MCF 10A (cell line): ENCODE measurements at regions of chr11 and their contacts with region 1.

Region 1: GRCh38 chr11:65859200-65859811 is 927 bp upstream of the MUS81 start:
- DNase-seq: peak; percentile 98
- H3K4me3 Mint-ChIP-seq: peak overlapping the region; percentile 83
- H3K27ac Mint-ChIP-seq: peak overlapping the region; percentile 93
- H3K4me1 Mint-ChIP-seq: peaks cover 32% of the 10 kb centered on the region
- H3K27me3 Mint-ChIP-seq: no peaks in the 10 kb centered on the region
- CTCF ChIP-seq: no peak

Region 2: DNA sequence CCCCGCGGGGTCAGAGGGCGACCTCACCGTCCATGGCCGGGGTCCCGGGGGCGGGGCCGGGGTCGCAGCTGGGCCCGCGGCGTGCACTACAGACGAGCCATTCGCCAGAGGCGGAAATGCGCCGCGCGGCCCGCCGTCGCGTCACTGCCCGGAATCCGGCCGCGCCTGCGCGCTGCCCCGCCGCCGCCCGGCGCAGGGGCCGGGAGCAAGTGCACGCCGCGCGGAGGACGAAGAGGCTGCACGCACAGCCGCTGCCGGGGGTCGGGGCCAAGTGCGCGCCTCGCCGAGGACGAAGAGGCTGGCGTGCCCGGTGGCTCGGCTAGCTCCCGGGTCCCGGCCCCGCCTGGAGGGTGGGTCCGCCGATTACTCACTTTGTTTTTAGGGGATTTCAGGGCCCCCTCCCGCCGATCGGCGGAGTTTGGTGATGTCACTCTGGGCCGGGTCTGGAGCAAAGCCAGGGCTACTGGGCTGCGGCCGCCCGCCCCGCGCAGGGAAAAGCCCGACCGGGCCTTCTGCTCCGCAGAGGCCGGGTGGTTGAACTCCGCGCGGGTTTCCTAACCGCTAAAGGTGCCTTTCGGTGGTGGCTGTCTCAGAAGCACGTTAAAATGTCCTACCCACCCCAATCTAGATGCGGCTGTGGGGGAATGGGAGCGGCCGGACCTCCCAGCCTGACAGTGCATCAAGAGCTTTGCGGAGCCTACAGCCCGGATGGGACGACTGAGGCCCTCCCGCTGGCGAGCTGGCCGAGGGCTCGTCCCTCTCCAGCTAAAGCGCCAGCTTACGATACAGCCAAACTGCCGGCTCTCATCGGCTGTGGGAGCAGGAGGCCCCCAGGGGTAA is 196.3 kb before region 1 on chr11 and contains the start of gene RELA:
- CTCF ChIA-PET with region 1: interaction called, 3 read pairs
- POLR2A ChIA-PET with region 1: interaction called, 15 read pairs
- intact Hi-C with region 1: no loop called
- DNase-seq: peak; percentile 91
- H3K4me3 Mint-ChIP-seq: peak within 1 kb of the TSS; percentile 74
- H3K27ac Mint-ChIP-seq: peak within 1 kb of the TSS; percentile 73
- H3K4me1 Mint-ChIP-seq: peaks cover 12% of the 10 kb centered on the region
- H3K27me3 Mint-ChIP-seq: no peaks in the 10 kb centered on the region
- CTCF ChIP-seq: no peak
- total RNA-seq, gene RELA: 82.1 and 83.0 TPM in 2 replicates

Region 3: GRCh38 chr11:65720237-65720934 is 138.9 kb before region 1 on chr11 and contains the start of gene RNASEH2C:
- CTCF ChIA-PET with region 1: interaction called, 7 read pairs
- POLR2A ChIA-PET with region 1: interaction called, 19 read pairs
- intact Hi-C with region 1: no loop called
- DNase-seq: peak; percentile 86
- H3K4me3 Mint-ChIP-seq: peak within 1 kb of the TSS; percentile 97
- H3K27ac Mint-ChIP-seq: peak within 1 kb of the TSS; percentile 75
- H3K4me1 Mint-ChIP-seq: peaks cover 10% of the 10 kb centered on the region
- H3K27me3 Mint-ChIP-seq: no peaks in the 10 kb centered on the region
- CTCF ChIP-seq: no peak
- total RNA-seq, gene RNASEH2C: 27.4 and 35.7 TPM in 2 replicates

Region 4: DNA sequence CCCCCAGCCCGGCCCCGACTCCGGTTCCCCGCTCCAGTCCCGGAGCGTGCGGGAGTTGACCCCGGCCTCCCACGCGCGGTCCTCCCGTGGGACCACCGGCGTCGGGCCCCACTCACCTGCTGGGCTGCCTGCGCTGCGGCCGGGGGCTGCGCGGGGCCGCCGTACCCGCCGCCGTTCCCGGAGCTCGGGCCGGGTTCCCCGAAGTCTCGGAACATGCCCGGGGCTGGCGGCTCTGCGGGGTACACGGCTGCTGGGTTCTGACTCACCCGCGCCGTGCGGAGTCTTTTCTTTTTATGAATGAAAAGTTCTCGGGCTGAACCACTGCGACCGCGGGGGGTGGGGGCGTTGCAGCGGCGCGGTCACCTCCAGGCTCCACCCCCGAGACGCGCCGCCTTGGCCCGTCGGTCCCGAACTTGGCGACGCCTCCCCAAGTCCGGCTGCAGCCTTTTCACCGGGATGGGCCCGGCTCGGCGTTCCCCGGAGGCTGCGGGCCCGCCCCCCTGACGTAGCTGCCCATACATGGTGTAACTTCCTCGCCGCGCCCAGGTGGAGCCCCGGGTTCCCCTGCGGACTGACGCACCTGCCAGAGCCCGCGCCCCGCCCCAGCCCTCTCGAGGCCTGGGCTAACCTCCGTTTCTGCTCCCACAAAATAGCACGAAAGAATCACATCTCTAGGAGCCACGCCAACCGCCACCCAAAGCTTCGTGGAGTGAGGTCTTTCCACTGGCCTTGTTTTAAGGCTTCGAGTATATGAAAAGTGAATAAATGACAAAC is 41.0 kb after region 1 on chr11 and contains the start of gene FOSL1:
- CTCF ChIA-PET with region 1: interaction called, 4 read pairs
- POLR2A ChIA-PET with region 1: interaction called, 41 read pairs
- intact Hi-C with region 1: no loop called
- DNase-seq: peak; percentile 97
- H3K4me3 Mint-ChIP-seq: peak within 1 kb of the TSS; percentile 96
- H3K27ac Mint-ChIP-seq: peak within 1 kb of the TSS; percentile 89
- H3K4me1 Mint-ChIP-seq: peaks cover 56% of the 10 kb centered on the region
- H3K27me3 Mint-ChIP-seq: no peaks in the 10 kb centered on the region
- CTCF ChIP-seq: no peak
- total RNA-seq, gene FOSL1: 95.3 and 124 TPM in 2 replicates

Region 5: DNA sequence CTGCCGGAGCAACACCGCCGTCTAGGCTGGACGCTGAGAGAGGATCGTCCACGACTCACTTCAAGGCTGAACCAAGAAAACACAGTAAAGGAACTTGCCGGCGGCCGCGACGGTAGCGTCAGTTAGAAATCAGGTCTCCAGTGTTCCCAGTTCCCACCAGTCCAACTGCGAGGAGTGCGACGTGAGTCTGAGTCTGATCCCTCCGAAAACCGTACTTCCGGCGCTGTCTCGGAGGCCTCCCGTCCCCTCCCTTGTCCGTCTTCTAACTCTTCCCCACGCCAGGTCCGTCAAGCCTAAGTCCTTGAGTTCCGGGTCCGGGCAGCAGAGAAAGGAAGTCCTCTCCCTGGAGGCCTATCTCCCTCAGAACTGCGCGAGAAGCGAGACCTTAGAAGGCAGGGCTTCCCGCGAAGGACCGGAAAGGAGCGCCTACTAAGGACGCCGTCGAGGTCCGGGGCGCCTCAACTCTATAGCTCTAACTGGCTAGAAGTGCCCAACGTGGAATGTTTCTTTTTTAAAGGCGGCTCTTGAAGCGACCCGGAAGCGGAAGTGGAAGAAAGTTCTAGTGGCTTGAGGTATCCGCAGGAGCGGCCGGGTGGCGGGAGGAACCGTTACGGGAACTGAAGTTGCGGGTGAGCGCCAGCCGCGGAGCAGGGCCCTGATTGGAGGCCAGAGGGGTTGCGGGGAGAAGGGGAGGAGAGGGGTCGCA is 142.8 kb after region 1 on chr11 and contains the starts of genes BANF1 and EIF1AD:
- CTCF ChIA-PET with region 1: no interaction called
- POLR2A ChIA-PET with region 1: interaction called, 32 read pairs
- intact Hi-C with region 1: no loop called
- DNase-seq: peak; percentile 99
- H3K4me3 Mint-ChIP-seq: peak within 1 kb of the TSS; percentile 97
- H3K27ac Mint-ChIP-seq: peak within 1 kb of the TSS; percentile 96
- H3K4me1 Mint-ChIP-seq: no peaks in the 10 kb centered on the region
- H3K27me3 Mint-ChIP-seq: no peaks in the 10 kb centered on the region
- CTCF ChIP-seq: no peak
- total RNA-seq, gene BANF1: 154 and 198 TPM in 2 replicates
- total RNA-seq, gene EIF1AD: 21.7 and 33.5 TPM in 2 replicates